HepG2 (cell line): ENCODE measurements at regions of chr7 and their contacts with region 1.

Region 1: GRCh38 chr7:116929914-116930913 is 23.1 kb upstream of the ST7 start:
- DNase-seq: peak; percentile 62
- ATAC-seq: peak; percentile 87
- H3K4me3 ChIP-seq: peak overlapping the region in 1 of 3 experiments; percentile 31; a peak in 2 of 6 replicates
- H3K27ac ChIP-seq: no peak overlapping the region
- H3K4me1 ChIP-seq: peaks cover 43% of the 10 kb centered on the region
- H3K27me3 ChIP-seq: no peaks in the 10 kb centered on the region; a peak in 2 of 5 replicates
- CTCF ChIP-seq: peak; percentile 93
- EP300 ChIP-seq: no peak
- POLR2A ChIP-seq: no peak
- RAD21 ChIP-seq: peak; percentile 88

Region 2: GRCh38 chr7:116953727-116954442 is 23.7 kb after region 1 on chr7:
- CTCF ChIA-PET with region 1: no interaction called
- POLR2A ChIA-PET with region 1: interaction called, 3 read pairs
- in situ Hi-C with region 1: no loop called
- intact Hi-C with region 1: loop called (anchors 2 kb)
- DNase-seq: peak; percentile 84
- ATAC-seq: peak; percentile 73
- H3K4me3 ChIP-seq: peak overlapping the region; percentile 81 to 90 (median 88)
- H3K27ac ChIP-seq: peak overlapping the region; percentile 98
- H3K4me1 ChIP-seq: peaks cover 44% of the 10 kb centered on the region
- H3K27me3 ChIP-seq: no peaks in the 10 kb centered on the region; a peak in 1 of 5 replicates
- CTCF ChIP-seq: no peak
- EP300 ChIP-seq: 0 out of 4 replicates have a peak, but pooled peaks of 1 of the 2 experiments have one; percentile 14
- POLR2A ChIP-seq: peak; percentile 32 to 81; a peak in 3 of 4 replicates
- RAD21 ChIP-seq: peak; percentile 27; the same call in 1 of the 2 replicates

Region 3: DNA sequence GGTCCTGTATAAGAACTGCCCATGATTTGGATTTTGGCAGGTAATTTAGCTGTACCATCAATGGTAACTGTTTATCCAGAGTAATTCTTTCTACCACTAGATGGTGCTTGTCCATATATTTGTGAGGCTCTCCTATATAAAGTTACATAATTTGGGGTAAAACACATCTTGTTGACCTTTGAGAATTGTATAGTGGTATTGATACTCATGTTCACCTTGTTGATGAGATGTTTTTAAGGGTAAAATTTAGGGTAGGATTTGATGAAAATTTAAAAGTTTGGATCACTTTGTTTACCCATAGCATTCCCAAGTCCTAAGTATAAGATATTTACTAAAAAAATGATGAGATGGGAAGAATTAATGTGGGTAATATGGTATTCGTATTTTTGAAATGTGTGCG is 54.7 kb after region 1 on chr7:
- CTCF ChIA-PET with region 1: interaction called, 3 read pairs
- POLR2A ChIA-PET with region 1: no interaction called
- in situ Hi-C with region 1: no loop called
- intact Hi-C with region 1: loop called (anchors 2 kb)
- DNase-seq: peak; percentile 27
- ATAC-seq: peak; percentile 64
- H3K4me3 ChIP-seq: no peak overlapping the region
- H3K27ac ChIP-seq: no peak overlapping the region
- H3K4me1 ChIP-seq: peaks cover 8% of the 10 kb centered on the region
- H3K27me3 ChIP-seq: no peaks in the 10 kb centered on the region
- CTCF ChIP-seq: peak; percentile 61
- EP300 ChIP-seq: no peak
- POLR2A ChIP-seq: no peak
- RAD21 ChIP-seq: no peak

Region 4: DNA sequence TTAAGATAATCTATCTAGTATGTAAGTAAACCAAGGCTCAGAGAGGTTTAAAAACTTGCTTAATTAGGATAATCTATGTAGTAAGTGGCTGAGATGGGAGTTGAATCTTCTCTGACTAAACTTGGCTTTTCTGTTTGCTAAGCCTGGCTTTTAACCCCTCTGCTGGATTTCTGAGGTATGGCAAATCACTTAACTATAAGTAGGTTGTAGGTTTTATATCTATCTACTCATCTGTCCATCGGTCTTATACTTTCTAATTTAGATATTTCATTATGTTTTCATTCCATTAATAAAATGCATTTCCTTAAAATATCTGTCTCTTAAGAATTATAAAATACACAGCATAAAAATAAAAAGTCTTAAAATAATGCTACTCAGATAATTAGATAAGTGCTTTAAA is 82.5 kb after region 1 on chr7:
- CTCF ChIA-PET with region 1: interaction called, 3 read pairs
- POLR2A ChIA-PET with region 1: no interaction called
- in situ Hi-C with region 1: no loop called
- intact Hi-C with region 1: loop called (anchors 1 kb)
- DNase-seq: peak; percentile 22
- ATAC-seq: peak; percentile 65; the same call in 2 of the 3 replicates
- H3K4me3 ChIP-seq: no peak overlapping the region
- H3K27ac ChIP-seq: no peak overlapping the region
- H3K4me1 ChIP-seq: no peaks in the 10 kb centered on the region
- H3K27me3 ChIP-seq: no peaks in the 10 kb centered on the region
- CTCF ChIP-seq: peak; percentile 14; the same call in 1 of the 2 replicates
- EP300 ChIP-seq: no peak
- POLR2A ChIP-seq: no peak
- RAD21 ChIP-seq: no peak

Region 5: DNA sequence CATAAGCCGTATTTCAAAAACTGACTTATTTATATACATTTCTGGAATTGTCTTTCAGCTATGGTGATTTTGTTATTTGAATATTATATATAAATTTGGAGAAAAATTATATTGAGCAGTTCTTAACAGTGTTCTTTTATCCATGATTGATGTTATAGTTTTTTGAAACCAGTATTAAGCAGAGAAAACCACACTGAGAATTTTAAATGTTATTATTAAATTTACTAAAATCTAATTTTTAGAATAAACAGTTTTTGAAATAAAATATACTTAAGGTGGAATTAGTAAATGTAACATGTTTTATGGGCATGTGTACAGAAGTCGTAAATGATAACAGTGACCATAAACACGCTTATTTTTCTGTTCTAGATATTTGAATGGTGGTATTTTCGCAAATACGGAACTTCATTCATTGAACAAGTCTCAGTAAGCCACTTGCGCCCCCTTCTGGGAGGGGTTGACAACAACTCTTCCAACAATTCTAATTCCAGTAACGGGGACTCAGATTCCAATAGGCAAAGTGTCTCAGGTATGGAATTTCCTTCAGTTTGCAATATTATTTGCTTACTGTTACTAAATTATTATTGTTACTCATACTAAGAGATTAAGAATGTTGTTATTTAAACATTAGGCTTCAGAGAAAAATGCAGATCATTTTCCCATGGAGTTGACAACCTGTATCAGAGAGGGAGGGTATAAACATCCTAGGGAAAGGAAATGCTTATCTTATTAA is 189.1 kb after region 1 on chr7:
- CTCF ChIA-PET with region 1: interaction called, 33 read pairs
- POLR2A ChIA-PET with region 1: no interaction called
- in situ Hi-C with region 1: loop called (anchors 5 kb)
- intact Hi-C with region 1: loop called (anchors 1 kb)
- DNase-seq: peak; percentile 72
- ATAC-seq: peak; percentile 57; the same call in 2 of the 3 replicates
- H3K4me3 ChIP-seq: no peak overlapping the region
- H3K27ac ChIP-seq: no peak overlapping the region
- H3K4me1 ChIP-seq: peaks cover 3% of the 10 kb centered on the region
- H3K27me3 ChIP-seq: no peaks in the 10 kb centered on the region
- CTCF ChIP-seq: peak; percentile 86
- EP300 ChIP-seq: no peak
- POLR2A ChIP-seq: no peak
- RAD21 ChIP-seq: peak; percentile 70

Region 6: DNA sequence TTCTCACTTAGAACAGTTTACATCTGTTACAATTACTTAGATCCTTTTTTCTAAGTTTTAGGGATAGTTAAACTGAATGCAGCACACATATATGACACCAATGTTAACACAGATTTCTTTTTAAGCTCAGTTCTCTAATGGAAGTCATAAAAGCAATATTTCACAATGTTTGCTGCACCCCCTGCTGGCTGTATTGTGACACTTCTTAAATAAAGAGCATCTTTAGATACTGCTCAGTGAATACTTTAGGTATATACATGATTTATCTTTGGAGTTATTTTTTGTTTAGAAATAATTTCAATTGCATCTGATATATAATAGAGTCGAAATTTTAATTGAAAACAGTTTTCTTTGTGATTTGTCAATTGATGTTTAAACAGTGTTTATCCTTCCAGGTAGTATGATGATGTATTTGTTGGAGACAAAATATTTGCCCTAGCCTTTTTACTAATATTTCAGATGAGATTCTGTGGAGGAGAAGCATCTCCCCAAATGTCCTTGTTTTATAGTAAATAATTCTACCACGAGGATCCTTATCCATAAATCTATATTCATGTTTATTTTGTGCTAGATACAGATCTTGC is 197.5 kb after region 1 on chr7:
- CTCF ChIA-PET with region 1: interaction called, 24 read pairs
- POLR2A ChIA-PET with region 1: no interaction called
- in situ Hi-C with region 1: no loop called
- intact Hi-C with region 1: loop called (anchors 1 kb)
- DNase-seq: peak; percentile 55
- ATAC-seq: peak; percentile 60; the same call in 2 of the 3 replicates
- H3K4me3 ChIP-seq: no peak overlapping the region
- H3K27ac ChIP-seq: no peak overlapping the region
- H3K4me1 ChIP-seq: peaks cover 12% of the 10 kb centered on the region
- H3K27me3 ChIP-seq: no peaks in the 10 kb centered on the region
- CTCF ChIP-seq: peak; percentile 68
- EP300 ChIP-seq: no peak
- POLR2A ChIP-seq: no peak
- RAD21 ChIP-seq: no peak